AG04449 (cell line): ENCODE measurements at regions of chr11 and their contacts with region 1.

Region 1: GRCh38 chr11:19071255-19071654 is 10.7 kb upstream of the MRGPRX2 start:
- DNase-seq: peak; percentile 40
- H3K4me3 ChIP-seq: peak overlapping the region; percentile 44; the same call in 1 of the 2 replicates
- CTCF ChIP-seq: peak; percentile 96

Region 2: GRCh38 chr11:18972336-18972735 is 98.9 kb before region 1 on chr11:
- CTCF ChIA-PET with region 1: no interaction called
- POLR2A ChIA-PET with region 1: no interaction called
- DNase-seq: no peak
- H3K4me3 ChIP-seq: no peak overlapping the region
- CTCF ChIP-seq: no peak

Region 3: DNA sequence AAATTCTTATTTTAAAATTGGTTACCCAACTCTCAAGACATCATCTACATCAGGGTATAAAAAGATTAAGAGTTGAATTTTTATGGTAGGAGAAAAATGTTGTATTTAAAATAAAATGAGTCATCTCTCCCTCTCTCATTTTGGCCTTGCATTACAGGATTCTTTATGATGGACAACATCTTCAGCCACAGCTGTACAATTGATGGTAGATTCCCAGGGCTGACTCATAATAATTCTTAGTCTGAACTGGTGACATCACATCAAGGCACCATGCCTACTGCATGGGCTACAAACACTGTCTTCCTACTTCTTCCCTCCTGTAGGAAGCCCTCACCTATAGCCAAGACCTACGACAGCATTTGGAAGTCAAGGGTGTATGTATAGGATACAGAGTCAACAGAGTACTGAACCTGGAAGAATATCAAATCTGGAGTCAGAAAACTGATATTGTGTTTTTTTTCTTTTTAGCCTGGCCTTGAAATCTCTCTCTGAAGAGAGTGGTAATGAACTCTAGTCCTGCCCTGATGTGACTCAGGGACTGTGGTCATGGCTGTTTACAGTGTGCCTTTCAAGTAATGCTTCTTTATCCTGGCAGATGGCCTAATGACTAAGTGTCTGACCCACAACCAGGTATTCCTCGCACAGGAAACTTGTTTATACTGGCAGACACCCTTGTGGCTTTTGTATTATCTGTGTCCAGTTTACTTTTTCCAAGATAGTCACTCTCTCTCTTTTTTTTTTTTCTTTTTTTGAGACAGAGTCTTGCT is 43.2 kb before region 1 on chr11:
- CTCF ChIA-PET with region 1: no interaction called
- POLR2A ChIA-PET with region 1: no interaction called
- DNase-seq: no peak
- H3K4me3 ChIP-seq: no peak overlapping the region
- CTCF ChIP-seq: no peak

Region 4: GRCh38 chr11:19087658-19088057 is 16.4 kb after region 1 on chr11:
- CTCF ChIA-PET with region 1: interaction called, 42 read pairs
- POLR2A ChIA-PET with region 1: no interaction called
- DNase-seq: peak; percentile 46
- H3K4me3 ChIP-seq: no peak overlapping the region
- CTCF ChIP-seq: no peak

Region 5: DNA sequence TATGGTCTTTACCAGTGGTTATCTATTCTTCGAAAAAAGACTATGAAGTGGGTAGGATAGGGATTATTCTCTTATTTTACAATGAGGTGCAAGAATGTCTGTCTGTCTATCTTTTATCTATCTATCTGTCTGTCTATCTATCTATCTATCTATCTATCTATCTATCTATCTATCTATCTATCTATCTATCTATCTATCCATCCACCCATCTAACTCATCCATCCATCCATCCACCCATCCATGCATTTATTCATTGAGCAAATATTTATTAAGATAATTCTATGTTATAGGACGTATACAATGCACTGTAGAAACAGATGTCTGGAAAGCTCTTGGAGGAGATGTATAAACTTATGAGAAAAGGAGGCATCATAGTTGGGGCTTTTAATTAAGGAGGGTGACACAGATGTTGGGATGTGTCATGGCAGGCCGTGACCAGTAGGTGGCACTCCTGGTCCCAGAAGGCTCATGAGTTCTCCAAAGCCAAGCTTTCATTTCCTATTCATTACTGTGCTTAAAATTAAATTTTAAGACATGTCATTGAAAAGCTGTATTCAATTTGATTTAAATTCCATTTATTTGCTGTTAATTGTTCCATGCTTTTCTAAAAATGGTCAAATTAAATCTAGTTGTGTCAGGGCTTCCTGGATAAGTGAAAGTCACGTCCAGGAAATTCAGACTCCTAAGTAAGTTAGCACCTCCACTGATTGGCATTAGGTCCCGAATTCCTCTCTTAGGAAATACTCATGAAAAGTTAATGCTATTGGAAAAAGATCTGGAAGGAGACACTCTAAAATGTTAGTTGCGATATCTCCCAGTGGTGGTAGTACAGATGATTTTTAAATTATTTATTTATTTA is 188.5 kb after region 1 on chr11:
- CTCF ChIA-PET with region 1: interaction called, 13 read pairs
- POLR2A ChIA-PET with region 1: no interaction called
- DNase-seq: no peak
- H3K4me3 ChIP-seq: no peak overlapping the region
- CTCF ChIP-seq: peak; percentile 84

Region 6: GRCh38 chr11:19326499-19326898 is 255.2 kb after region 1 on chr11:
- CTCF ChIA-PET with region 1: interaction called, 14 read pairs
- POLR2A ChIA-PET with region 1: interaction called, 3 read pairs
- DNase-seq: no peak
- H3K4me3 ChIP-seq: no peak overlapping the region
- CTCF ChIP-seq: no peak